ENCODE measurements at regions of chr9 and their contacts with region 1.

Region 1: GRCh38 chr9:94783102-94783664 is 56.7 kb downstream of the AOPEP start:
- DNase-seq: peak; percentile 57
- ATAC-seq: peak; percentile 30
- H3K4me3 Mint-ChIP-seq: no peak overlapping the region
- H3K27ac Mint-ChIP-seq: no peak overlapping the region
- H3K4me1 Mint-ChIP-seq: peaks cover 11% of the 10 kb centered on the region
- H3K27me3 Mint-ChIP-seq: no peaks in the 10 kb centered on the region
- CTCF ChIP-seq: peak; percentile 67

Region 2: GRCh38 chr9:94771096-94771495 is 12.1 kb before region 1 on chr9:
- CTCF ChIA-PET with region 1: interaction called, 11 read pairs
- POLR2A ChIA-PET with region 1: no interaction called
- intact Hi-C with region 1: no loop called
- DNase-seq: no peak
- ATAC-seq: no peak
- H3K4me3 Mint-ChIP-seq: no peak overlapping the region
- H3K27ac Mint-ChIP-seq: no peak overlapping the region
- H3K4me1 Mint-ChIP-seq: peaks cover 1% of the 10 kb centered on the region
- H3K27me3 Mint-ChIP-seq: no peaks in the 10 kb centered on the region
- CTCF ChIP-seq: no peak

Region 3: GRCh38 chr9:94917840-94918753 is 134.9 kb after region 1 on chr9:
- CTCF ChIA-PET with region 1: interaction called, 12 read pairs
- POLR2A ChIA-PET with region 1: no interaction called
- intact Hi-C with region 1: no loop called
- DNase-seq: peak; percentile 28
- ATAC-seq: peak; percentile 72
- H3K4me3 Mint-ChIP-seq: no peak overlapping the region
- H3K27ac Mint-ChIP-seq: no peak overlapping the region
- H3K4me1 Mint-ChIP-seq: no peaks in the 10 kb centered on the region
- H3K27me3 Mint-ChIP-seq: no peaks in the 10 kb centered on the region
- CTCF ChIP-seq: no peak

Measured in activated CD8-positive, alpha-beta T cell treated with anti-CD3 and anti-CD28 coated beads for 36 hours (primary cell).